ENCODE measurements at regions of chr10 and their contacts with region 1.

Region 1: GRCh38 chr10:7133278-7133677 is 277.6 kb downstream of the SFMBT2 start:
- DNase-seq: no peak
- H3K4me3 ChIP-seq: no peak overlapping the region
- H3K27ac ChIP-seq: no peak overlapping the region
- H3K27me3 ChIP-seq: no peaks in the 10 kb centered on the region
- CTCF ChIP-seq: no peak

Region 2: DNA sequence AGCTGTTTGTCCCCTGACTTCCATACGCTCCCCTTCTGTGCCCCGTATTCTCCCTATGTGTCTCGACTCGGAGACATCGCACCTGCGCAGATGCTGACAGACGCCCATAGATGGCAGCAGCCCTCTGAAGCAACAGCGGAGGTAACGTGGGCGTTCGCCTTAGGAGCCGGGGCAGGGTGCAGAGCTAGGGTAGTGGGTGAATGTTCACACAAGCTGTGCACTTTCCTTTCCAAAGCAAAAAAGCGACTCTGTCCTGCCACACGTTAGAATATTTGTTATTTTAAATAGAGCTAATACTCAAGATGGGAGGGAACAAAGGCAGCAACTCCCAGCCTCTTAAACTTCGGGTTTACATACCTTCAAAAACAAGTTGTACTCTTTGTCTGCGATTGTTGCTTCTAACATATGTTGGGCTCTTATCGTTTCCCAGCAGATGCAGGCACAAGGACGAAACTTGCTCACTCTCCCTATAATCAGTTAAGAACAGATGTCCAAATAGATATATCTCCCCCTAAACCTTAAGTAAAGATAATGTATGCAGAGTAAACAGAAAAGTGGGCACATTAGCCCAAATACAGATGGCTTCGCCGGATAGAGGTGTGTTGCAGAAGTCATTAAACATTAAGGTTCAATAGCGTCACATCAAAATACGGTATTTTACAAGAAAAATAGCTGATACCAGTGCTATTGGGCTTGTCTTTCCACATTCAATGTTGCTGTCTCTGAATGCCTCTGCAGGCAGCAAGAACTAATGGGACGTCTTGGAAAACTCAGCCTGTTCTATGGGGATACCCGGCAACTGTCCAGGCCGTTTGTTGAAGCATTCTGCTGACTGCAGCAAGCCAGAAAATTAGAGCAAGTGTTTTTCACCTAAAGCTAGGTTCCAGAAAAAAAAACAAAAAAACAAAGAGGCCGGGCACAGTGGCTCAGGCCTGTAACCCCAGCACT is 212.9 kb before region 1 on chr10:
- in situ Hi-C with region 1: no loop called
- DNase-seq: peak; percentile 32
- H3K4me3 ChIP-seq: no peak overlapping the region
- H3K27ac ChIP-seq: no peak overlapping the region
- H3K27me3 ChIP-seq: no peaks in the 10 kb centered on the region
- CTCF ChIP-seq: peak; percentile 94

Region 3: DNA sequence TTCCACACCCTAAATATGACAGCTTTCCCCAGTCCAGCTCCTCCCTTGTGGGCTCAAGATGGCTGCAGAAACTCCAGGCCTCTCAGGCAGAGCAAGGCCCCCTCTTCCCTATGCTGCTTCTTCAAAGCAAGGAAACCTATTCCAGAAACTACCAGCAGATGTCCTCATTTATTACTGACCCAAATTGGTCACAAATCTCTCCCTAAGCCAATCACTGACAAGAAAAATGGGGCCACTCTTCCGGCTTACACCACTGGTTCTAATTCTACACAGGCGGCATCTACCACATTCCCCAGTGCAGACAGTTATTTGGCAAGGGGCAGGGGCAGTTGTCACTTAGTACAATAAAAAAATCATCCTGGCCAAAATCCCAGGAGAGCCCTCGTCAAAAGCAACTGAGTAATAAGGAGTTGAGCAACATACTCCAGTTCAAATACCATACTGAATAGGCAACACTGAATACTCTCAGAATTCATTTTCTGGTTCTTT is 127.2 kb after region 1 on chr10:
- in situ Hi-C with region 1: loop called (anchors 25 kb)
- DNase-seq: peak; percentile 45
- H3K4me3 ChIP-seq: no peak overlapping the region
- H3K27ac ChIP-seq: no peak overlapping the region
- H3K27me3 ChIP-seq: no peaks in the 10 kb centered on the region
- CTCF ChIP-seq: peak; percentile 72